ENCODE measurements at regions of chr12 and their contacts with region 1.

Region 1: GRCh38 chr12:104286538-104287482 is 16.7 kb upstream of the EID3 start:
- DNase-seq: peak; percentile 87 to 90
- H3K4me3 ChIP-seq: peak overlapping the region; percentile 75 to 98 (median 90)
- H3K27ac ChIP-seq: peak overlapping the region; percentile 91
- H3K4me1 ChIP-seq: peaks cover 3 to 14% (median 4%) of the 10 kb centered on the region in 4 experiments; a peak in 6 of 7 replicates
- H3K27me3 ChIP-seq: no peaks in the 10 kb centered on the region
- CTCF ChIP-seq: no peak
- EP300 ChIP-seq: no peak
- POLR2A ChIP-seq: peak; percentile 83 to 94
- RAD21 ChIP-seq: no peak

Region 2: DNA sequence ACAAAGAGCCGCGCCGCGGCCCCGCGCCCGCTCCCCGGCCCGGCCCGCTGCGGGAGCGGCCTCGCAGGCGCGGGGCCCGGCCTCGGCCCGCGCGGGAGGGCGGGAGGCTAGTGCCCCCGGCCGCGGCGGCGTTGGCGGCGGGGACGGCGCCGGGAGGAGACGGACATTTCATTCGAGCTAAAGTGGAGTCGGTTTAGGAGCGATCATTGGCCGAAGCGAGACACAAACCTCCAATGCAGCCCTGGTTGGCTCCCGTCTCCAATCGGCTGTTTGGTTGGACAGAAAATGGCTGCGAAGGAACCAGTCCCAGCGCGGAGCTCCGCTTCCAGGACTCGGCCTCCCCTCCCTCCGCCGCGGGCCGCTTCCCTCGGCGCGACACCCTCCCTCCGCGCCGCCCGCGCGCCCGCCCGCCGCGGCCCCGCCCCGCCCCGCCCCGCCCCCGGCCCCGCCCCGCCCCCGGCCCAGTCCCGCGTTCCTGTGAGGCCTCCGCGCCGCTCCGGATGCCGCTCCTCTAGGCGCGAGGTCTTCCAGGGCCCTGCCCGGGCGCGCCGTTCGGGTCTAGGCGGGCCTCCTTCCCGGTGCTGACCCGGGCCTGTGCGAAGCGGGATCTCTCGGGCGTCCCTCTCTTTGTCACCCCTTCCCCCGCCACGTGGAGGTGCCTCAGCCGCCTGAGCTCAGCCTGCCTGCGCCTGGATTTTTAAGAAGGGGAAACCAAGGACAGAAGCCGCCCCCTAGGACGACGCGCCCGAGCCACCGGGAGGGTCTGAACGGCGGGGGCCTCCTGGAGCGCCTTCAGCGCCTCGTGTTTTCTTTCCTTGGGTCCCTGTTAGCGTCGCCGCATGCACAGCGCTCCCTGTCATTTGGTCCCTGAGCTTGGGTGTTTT is 148.7 kb before region 1 on chr12 and contains the start of gene NFYB:
- CTCF ChIA-PET with region 1: interaction called, 3 read pairs
- POLR2A ChIA-PET with region 1: interaction called, 16 read pairs
- DNase-seq: peak; percentile 79 to 90
- H3K4me3 ChIP-seq: peak within 1 kb of the TSS; percentile 69 to 94 (median 89)
- H3K27ac ChIP-seq: peak within 1 kb of the TSS; percentile 92
- H3K4me1 ChIP-seq: peaks cover 3 to 9% (median 6%) of the 10 kb centered on the region in 4 experiments; a peak in 6 of 7 replicates
- H3K27me3 ChIP-seq: 0 out of 7 replicates have a peak, but pooled peaks cover 0 to 3% (median 0%) of the 10 kb centered on the region in 4 experiments
- CTCF ChIP-seq: no peak
- EP300 ChIP-seq: peak in 1 of 2 experiments; percentile 100; a peak in 1 of 3 replicates
- POLR2A ChIP-seq: peak; percentile 90 to 92
- RAD21 ChIP-seq: no peak
- total RNA-seq, gene NFYB: 42.2 and 43.5 TPM in 2 replicates

Region 3: GRCh38 chr12:104215638-104216297 is 71.0 kb before region 1 on chr12 and contains the start of gene TXNRD1:
- CTCF ChIA-PET with region 1: interaction called, 11 read pairs
- POLR2A ChIA-PET with region 1: interaction called, 14 read pairs
- DNase-seq: peak; percentile 64 to 90
- H3K4me3 ChIP-seq: peak within 1 kb of the TSS; percentile 45 to 68 (median 56)
- H3K27ac ChIP-seq: no peak within 1 kb of the TSS
- H3K4me1 ChIP-seq: no peaks in the 10 kb centered on the region
- H3K27me3 ChIP-seq: peaks cover 0 to 12% (median 10%) of the 10 kb centered on the region in 4 experiments; a peak in 6 of 7 replicates
- CTCF ChIP-seq: peak; percentile 75 to 87 (median 80)
- EP300 ChIP-seq: no peak
- POLR2A ChIP-seq: peak; percentile 69 to 74
- RAD21 ChIP-seq: peak; percentile 76 to 85
- total RNA-seq, gene TXNRD1: 120 and 127 TPM in 2 replicates

Region 4: GRCh38 chr12:104243551-104243950 is 43.3 kb before region 1 on chr12:
- CTCF ChIA-PET with region 1: no interaction called
- POLR2A ChIA-PET with region 1: interaction called, 12 read pairs
- DNase-seq: no peak
- H3K4me3 ChIP-seq: no peak overlapping the region
- H3K27ac ChIP-seq: no peak overlapping the region
- H3K4me1 ChIP-seq: no peaks in the 10 kb centered on the region
- H3K27me3 ChIP-seq: no peaks in the 10 kb centered on the region
- CTCF ChIP-seq: no peak
- EP300 ChIP-seq: no peak
- POLR2A ChIP-seq: no peak
- RAD21 ChIP-seq: no peak

Region 5: GRCh38 chr12:104276273-104277131 is 10.3 kb before region 1 on chr12:
- CTCF ChIA-PET with region 1: interaction called, 7 read pairs
- POLR2A ChIA-PET with region 1: interaction called, 61 read pairs
- DNase-seq: no peak
- H3K4me3 ChIP-seq: no peak overlapping the region
- H3K27ac ChIP-seq: no peak overlapping the region
- H3K4me1 ChIP-seq: no peaks in the 10 kb centered on the region
- H3K27me3 ChIP-seq: no peaks in the 10 kb centered on the region
- CTCF ChIP-seq: no peak
- EP300 ChIP-seq: no peak
- POLR2A ChIP-seq: no peak
- RAD21 ChIP-seq: no peak

Region 6: DNA sequence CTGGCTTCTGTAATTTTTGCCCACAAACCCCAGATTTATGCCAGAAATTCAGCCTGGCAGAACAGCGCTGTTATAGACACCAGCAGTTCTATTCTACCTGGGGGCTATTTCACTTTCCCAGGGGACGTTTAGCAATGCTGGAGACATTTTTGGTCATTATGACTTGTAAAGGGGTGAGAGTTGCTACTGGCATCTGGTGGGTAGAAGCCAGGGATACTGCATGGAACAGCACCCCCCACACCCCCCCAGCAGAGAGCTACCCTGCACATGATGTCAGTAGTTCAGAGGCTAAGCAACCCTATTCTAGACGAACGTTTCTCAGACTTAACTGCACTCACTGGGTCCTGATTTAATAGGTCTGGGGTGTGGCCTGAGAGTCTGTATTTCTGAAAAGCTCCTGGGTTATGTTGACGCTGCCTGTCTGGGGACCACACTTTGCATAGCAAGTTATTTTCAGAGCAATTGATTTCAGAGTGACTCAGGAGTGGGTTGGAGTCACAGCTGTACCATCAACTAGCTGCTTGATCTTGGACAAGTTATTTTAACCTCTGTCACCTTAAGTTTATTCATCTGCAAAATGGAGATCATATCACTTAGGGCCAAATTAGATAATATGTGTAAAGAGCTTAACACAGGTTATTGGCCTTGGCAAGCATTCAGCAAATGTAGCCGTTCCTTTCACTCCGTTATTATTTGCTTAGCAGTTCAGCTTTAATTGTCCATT is 218.4 kb after region 1 on chr12:
- CTCF ChIA-PET with region 1: no interaction called
- POLR2A ChIA-PET with region 1: no interaction called
- DNase-seq: no peak
- H3K4me3 ChIP-seq: no peak overlapping the region
- H3K27ac ChIP-seq: no peak overlapping the region
- H3K4me1 ChIP-seq: peaks cover 9 to 20% (median 14%) of the 10 kb centered on the region in 4 experiments; a peak in 6 of 7 replicates
- H3K27me3 ChIP-seq: no peaks in the 10 kb centered on the region
- CTCF ChIP-seq: no peak
- EP300 ChIP-seq: no peak
- POLR2A ChIP-seq: no peak
- RAD21 ChIP-seq: no peak